ENCODE measurements at regions of chr20 and their contacts with region 1.

Region 1: DNA sequence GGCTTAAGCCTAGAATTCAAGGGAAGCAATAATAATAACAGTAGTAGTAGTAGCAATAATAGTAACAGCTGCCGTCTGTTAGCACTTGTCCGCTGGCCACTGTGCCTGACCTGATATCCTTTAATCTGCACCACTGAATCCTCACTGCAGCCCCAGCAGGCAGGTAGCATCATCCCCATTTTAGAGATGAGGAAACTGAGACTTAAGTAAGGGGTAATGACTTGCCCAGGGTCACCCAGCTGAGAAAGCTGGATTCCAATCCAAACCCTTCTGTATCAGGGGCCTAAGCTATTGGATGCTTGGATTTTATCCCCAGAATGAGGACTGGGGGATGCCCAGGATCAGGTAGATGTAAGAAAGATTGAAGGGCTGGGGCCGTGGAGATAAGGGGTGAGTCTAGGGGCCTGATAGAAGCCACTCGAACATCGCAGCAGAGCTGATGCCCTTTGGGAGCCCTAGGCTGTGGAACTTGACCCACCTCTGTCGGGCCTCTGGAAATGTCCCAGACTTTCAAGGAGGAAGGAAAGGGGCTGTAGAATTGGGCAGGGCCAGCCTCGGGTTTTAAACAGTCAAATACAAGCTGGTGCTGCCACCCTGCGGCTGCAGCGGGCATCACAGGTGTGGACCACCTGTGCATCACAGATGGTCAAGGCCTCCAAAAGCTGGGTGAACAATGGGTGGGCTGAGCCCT is 102.1 kb upstream of the MYL9 start:
- DNase-seq: peak; percentile 32
- ATAC-seq: peak; percentile 74
- H3K4me3 ChIP-seq: no peak overlapping the region
- H3K27ac ChIP-seq: no peak overlapping the region
- H3K4me1 ChIP-seq: peaks cover 3 to 16% of the 10 kb centered on the region in 2 experiments; a peak in 1 of 4 replicates
- H3K27me3 ChIP-seq: no peaks in the 10 kb centered on the region
- CTCF ChIP-seq: peak; percentile 81 to 97 (median 95)
- POLR2A ChIP-seq: no peak
- RAD21 ChIP-seq: peak; percentile 94

Region 2: GRCh38 chr20:36154700-36155628 is 284.2 kb before region 1 on chr20 and contains the start of gene EPB41L1:
- CTCF ChIA-PET with region 1: interaction called, 5 read pairs
- POLR2A ChIA-PET with region 1: no interaction called
- RAD21 ChIA-PET with region 1: no interaction called
- intact Hi-C with region 1: loop called (anchors 1 kb)
- DNase-seq: no peak
- ATAC-seq: peak; percentile 44
- H3K4me3 ChIP-seq: peak within 1 kb of the TSS; percentile 53 to 64
- H3K27ac ChIP-seq: peak within 1 kb of the TSS; percentile 44; the same call in 1 of the 2 replicates
- H3K4me1 ChIP-seq: peaks cover 14 to 27% of the 10 kb centered on the region in 2 experiments
- H3K27me3 ChIP-seq: no peaks in the 10 kb centered on the region
- CTCF ChIP-seq: no peak
- POLR2A ChIP-seq: no peak
- RAD21 ChIP-seq: no peak
- total RNA-seq, gene EPB41L1: 42.1 TPM

Region 3: GRCh38 chr20:36214684-36215256 is 224.4 kb before region 1 on chr20:
- CTCF ChIA-PET with region 1: interaction called, 6 read pairs
- POLR2A ChIA-PET with region 1: no interaction called
- RAD21 ChIA-PET with region 1: interaction called in 1 of 2 experiments, 3 read pairs
- intact Hi-C with region 1: loop called (anchors 1 kb)
- DNase-seq: no peak
- ATAC-seq: peak; percentile 70
- H3K4me3 ChIP-seq: no peak overlapping the region
- H3K27ac ChIP-seq: no peak overlapping the region
- H3K4me1 ChIP-seq: peaks cover 3 to 5% of the 10 kb centered on the region in 2 experiments; a peak in 2 of 4 replicates
- H3K27me3 ChIP-seq: no peaks in the 10 kb centered on the region
- CTCF ChIP-seq: peak; percentile 65 to 79 (median 76)
- POLR2A ChIP-seq: no peak
- RAD21 ChIP-seq: peak; percentile 75

Region 4: DNA sequence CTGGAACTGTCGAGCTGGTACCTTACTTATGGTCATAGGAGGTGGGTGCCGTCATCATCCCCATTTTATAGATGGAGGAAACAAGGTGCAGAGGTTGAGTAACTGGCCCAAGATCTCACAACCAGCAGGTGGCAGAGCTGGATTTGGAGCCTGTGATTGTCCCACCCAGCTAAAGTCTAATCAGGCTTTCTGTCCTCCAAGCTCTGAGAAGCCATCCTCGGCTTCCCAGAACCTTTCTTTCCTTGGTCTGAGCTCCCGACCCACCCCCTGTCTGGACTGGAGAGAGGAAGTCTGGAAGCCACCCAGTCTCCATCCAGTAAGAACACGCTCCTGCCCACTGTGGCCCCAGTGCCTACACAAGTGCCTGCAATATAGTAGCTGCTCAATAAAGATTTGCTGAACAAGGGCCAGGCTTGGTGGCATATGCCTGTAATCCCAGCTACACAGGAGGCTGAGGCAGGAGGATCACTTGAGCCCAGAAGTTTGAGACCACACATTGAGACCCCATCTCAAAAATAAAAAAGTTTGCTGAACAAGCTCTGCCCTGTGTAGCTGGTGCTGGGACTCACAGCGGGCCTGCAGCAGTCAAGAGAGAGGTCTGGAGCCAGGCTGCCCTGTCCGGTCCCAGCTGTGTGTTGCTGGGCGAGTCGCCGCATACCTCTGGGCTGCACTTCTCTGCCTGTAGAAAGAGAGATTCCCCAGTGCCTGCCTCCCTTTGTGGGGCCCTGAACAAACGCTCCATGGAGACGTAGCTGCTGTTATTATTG is 165.6 kb before region 1 on chr20:
- CTCF ChIA-PET with region 1: interaction called, 24 read pairs
- POLR2A ChIA-PET with region 1: no interaction called
- RAD21 ChIA-PET with region 1: interaction called, 4 to 5 read pairs
- intact Hi-C with region 1: loop called (anchors 1 kb)
- DNase-seq: peak; percentile 4
- ATAC-seq: peak; percentile 68
- H3K4me3 ChIP-seq: no peak overlapping the region
- H3K27ac ChIP-seq: no peak overlapping the region
- H3K4me1 ChIP-seq: no peaks in the 10 kb centered on the region
- H3K27me3 ChIP-seq: no peaks in the 10 kb centered on the region
- CTCF ChIP-seq: peak; percentile 42 to 48 (median 47); a peak in 5 of 6 replicates
- POLR2A ChIP-seq: no peak
- RAD21 ChIP-seq: peak; percentile 66

Measured in HCT116 (cell line).